Common myeloid progenitor, CD34-positive (primary cell): ENCODE measurements at regions of chr5 and their contacts with region 1.

Region 1: DNA sequence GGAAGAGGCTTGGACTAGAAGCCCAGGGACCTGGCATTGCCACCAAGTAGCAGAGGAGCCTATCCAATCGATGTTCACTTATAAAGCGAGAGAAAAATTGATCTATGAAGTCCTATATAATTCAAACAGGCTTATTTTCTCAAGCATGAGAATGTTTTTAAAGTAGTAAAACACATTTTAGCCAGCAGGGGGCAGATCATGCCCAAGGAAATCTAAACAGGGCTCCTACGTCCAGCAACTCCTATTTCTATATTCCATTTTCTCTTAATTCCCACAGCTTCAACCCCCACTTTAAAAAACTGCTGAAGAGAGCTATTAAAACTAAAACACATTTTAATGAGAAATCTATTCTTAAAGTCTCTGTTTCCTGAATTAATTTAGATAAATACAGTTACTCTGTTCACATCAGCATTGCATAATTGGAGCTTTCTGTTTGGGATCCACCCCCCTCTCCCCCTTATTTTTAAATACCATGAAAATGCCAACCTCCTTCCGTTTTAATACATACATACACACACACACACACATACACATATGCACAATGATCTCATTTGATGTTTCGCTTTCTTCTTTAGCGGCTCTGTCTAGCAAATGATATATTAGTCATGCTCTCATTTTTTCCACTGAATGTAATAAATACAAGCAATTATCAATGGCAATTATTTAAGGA is 144.9 kb downstream of the MYO10 start:
- DNase-seq: peak; percentile 64 to 76 (median 71)
- H3K4me3 ChIP-seq: no peak overlapping the region
- H3K27ac ChIP-seq: no peak overlapping the region
- H3K4me1 ChIP-seq: peaks cover 0 to 3% (median 0%) of the 10 kb centered on the region in 4 experiments
- H3K27me3 ChIP-seq: no peaks in the 10 kb centered on the region

Region 2: GRCh38 chr5:16768184-16768583 is 23.0 kb before region 1 on chr5:
- CTCF ChIA-PET with region 1: no interaction called
- POLR2A ChIA-PET with region 1: no interaction called
- DNase-seq: no peak
- H3K4me3 ChIP-seq: no peak overlapping the region
- H3K27ac ChIP-seq: no peak overlapping the region
- H3K4me1 ChIP-seq: no peaks in the 10 kb centered on the region
- H3K27me3 ChIP-seq: no peaks in the 10 kb centered on the region

Region 3: GRCh38 chr5:16819522-16820167 is 28.5 kb after region 1 on chr5:
- CTCF ChIA-PET with region 1: no interaction called
- POLR2A ChIA-PET with region 1: no interaction called
- DNase-seq: no peak
- H3K4me3 ChIP-seq: no peak overlapping the region
- H3K27ac ChIP-seq: no peak overlapping the region
- H3K4me1 ChIP-seq: no peaks in the 10 kb centered on the region
- H3K27me3 ChIP-seq: no peaks in the 10 kb centered on the region

Region 4: GRCh38 chr5:17204133-17204489 is 412.9 kb after region 1 on chr5:
- CTCF ChIA-PET with region 1: interaction called, 14 read pairs
- POLR2A ChIA-PET with region 1: no interaction called
- DNase-seq: no peak
- H3K4me3 ChIP-seq: no peak overlapping the region
- H3K27ac ChIP-seq: no peak overlapping the region
- H3K4me1 ChIP-seq: no peaks in the 10 kb centered on the region
- H3K27me3 ChIP-seq: peaks cover 0 to 3% (median 1%) of the 10 kb centered on the region in 5 experiments